ENCODE measurements at regions of chr1 and their contacts with region 1.

Region 1: DNA sequence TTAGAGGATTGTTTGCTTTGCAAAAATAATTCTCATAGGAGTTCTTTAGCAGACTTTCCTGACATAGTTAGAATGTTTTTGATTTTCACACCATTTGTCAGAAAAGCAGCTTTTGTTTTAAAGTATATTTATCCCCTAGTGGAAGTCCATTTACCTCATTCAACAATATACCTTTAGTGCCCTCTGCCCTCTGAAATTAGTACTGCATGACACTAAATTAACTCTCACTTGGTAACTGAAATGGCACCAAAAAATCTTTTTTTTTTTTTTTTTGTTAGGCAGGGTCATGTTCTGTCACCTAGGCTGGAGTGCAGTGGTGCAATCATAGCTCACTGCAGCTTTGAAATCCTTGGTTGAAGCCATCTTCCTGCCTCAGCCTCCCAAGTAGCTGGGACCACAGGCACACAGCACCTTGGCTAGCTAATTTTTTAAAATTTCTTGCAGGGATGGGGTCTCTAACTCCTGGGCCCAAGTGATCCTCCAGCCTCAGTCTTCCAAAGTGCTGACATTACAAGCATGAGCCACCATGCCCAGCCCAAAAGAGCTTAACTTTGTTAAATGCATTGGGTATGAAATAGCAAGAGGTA is 13.6 kb downstream of the LRRC42 start:
- DNase-seq: no peak
- ATAC-seq: peak; percentile 73; the same call in 1 of the 2 replicates
- H3K4me3 ChIP-seq: no peak overlapping the region
- H3K27ac ChIP-seq: no peak overlapping the region
- H3K4me1 ChIP-seq: peaks cover 6% of the 10 kb centered on the region
- H3K27me3 ChIP-seq: no peaks in the 10 kb centered on the region
- CTCF ChIP-seq: peak; percentile 67

Region 2: GRCh38 chr1:53878492-53879105 is 81.2 kb before region 1 on chr1:
- CTCF ChIA-PET with region 1: interaction called, 15 read pairs
- POLR2A ChIA-PET with region 1: no interaction called
- in situ Hi-C with region 1: no loop called
- intact Hi-C with region 1: no loop called
- DNase-seq: peak; percentile 35
- ATAC-seq: 0 out of 2 replicates have a peak, but pooled peaks have one; percentile 60
- H3K4me3 ChIP-seq: no peak overlapping the region
- H3K27ac ChIP-seq: no peak overlapping the region
- H3K4me1 ChIP-seq: no peaks in the 10 kb centered on the region
- H3K27me3 ChIP-seq: no peaks in the 10 kb centered on the region
- CTCF ChIP-seq: peak; percentile 82

Region 3: GRCh38 chr1:53919675-53920066 is 40.1 kb before region 1 on chr1:
- CTCF ChIA-PET with region 1: interaction called, 12 read pairs
- POLR2A ChIA-PET with region 1: no interaction called
- in situ Hi-C with region 1: no loop called
- intact Hi-C with region 1: no loop called
- DNase-seq: no peak
- ATAC-seq: no peak
- H3K4me3 ChIP-seq: no peak overlapping the region
- H3K27ac ChIP-seq: no peak overlapping the region
- H3K4me1 ChIP-seq: no peaks in the 10 kb centered on the region
- H3K27me3 ChIP-seq: no peaks in the 10 kb centered on the region
- CTCF ChIP-seq: no peak

Region 4: DNA sequence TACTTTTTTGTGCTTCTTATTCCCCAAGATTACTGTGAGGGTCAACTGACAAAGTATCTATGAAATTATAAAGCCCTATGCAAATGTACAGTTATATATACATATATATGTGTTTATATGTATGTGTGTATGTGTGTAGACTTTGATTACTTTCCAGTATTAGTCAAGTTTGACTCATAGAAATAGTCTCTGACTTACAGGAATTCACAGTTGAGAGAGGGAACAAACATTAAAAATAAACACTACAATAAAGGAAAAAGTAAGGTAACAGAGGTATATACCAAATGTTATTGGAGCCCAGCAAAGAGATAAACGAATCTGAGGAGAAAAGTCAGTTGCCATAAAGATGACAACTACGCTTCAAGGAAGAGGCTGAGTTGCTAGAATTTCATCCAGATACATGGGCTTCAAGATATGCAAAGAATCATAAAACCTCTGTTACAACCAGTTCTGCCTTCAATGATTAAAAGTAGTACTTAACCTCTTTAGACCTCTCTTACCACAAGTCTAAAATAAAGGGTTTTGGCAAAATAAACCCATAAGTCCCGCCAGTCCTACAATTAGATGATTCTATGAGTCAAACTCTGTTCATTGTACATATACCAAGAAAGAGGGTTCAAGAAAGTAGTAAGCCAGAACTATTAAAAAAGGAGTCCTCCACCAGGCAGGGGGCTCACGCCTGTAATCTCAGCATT is 21.5 kb before region 1 on chr1:
- CTCF ChIA-PET with region 1: no interaction called
- POLR2A ChIA-PET with region 1: no interaction called
- in situ Hi-C with region 1: no loop called
- intact Hi-C with region 1: no loop called
- DNase-seq: no peak
- ATAC-seq: no peak
- H3K4me3 ChIP-seq: no peak overlapping the region
- H3K27ac ChIP-seq: no peak overlapping the region
- H3K4me1 ChIP-seq: no peaks in the 10 kb centered on the region
- H3K27me3 ChIP-seq: no peaks in the 10 kb centered on the region
- CTCF ChIP-seq: no peak

Region 5: DNA sequence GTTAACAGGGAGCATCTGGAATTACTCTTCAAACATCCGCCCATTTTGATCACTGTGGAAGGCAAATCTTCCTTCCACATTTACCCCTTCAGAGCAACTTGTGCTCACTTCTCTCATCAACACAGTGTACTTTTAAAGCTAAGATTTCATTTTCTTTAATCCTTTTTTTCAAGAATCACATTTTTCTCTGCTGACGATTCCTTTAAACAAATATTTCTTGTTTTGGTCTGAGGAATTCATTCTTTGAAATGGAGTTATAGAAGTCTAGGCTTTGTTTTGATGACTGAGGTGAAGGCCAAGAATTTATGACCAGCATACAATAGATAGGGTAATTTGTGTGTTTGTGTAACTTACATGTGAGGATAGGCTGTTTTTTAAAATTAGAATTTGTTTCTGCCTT is 12.0 kb after region 1 on chr1:
- CTCF ChIA-PET with region 1: no interaction called
- POLR2A ChIA-PET with region 1: no interaction called
- in situ Hi-C with region 1: no loop called
- intact Hi-C with region 1: no loop called
- DNase-seq: no peak
- ATAC-seq: no peak
- H3K4me3 ChIP-seq: no peak overlapping the region
- H3K27ac ChIP-seq: no peak overlapping the region
- H3K4me1 ChIP-seq: peaks cover 12% of the 10 kb centered on the region
- H3K27me3 ChIP-seq: no peaks in the 10 kb centered on the region
- CTCF ChIP-seq: no peak